Activated T-helper 1 cell treated with anti-CD3 and anti-CD28 coated beads, Interleukin-12 subunit alpha, Interleukin-12 subunit beta, Interleukin-2, Interleukin-4 antibody, amounts not matched to agents 30 ng/mL and 10 ng/mL and 1 ng/mL, durations not matched to agents 14 hours and 24 hours and 36 hours (primary cell): ENCODE measurements at regions of chr6 and their contacts with region 1.

Region 1: GRCh38 chr6:52419809-52420670 is at the start of gene EFHC1:
- DNase-seq: peak; percentile 98
- H3K4me3 Mint-ChIP-seq: no peak within 1 kb of the TSS
- H3K27ac Mint-ChIP-seq: no peak within 1 kb of the TSS
- H3K4me1 Mint-ChIP-seq: peaks cover 14% of the 10 kb centered on the region
- H3K27me3 Mint-ChIP-seq: peaks cover 6% of the 10 kb centered on the region
- total RNA-seq, gene EFHC1: 0.70 and 1.3 TPM in 2 replicates

Region 2: DNA sequence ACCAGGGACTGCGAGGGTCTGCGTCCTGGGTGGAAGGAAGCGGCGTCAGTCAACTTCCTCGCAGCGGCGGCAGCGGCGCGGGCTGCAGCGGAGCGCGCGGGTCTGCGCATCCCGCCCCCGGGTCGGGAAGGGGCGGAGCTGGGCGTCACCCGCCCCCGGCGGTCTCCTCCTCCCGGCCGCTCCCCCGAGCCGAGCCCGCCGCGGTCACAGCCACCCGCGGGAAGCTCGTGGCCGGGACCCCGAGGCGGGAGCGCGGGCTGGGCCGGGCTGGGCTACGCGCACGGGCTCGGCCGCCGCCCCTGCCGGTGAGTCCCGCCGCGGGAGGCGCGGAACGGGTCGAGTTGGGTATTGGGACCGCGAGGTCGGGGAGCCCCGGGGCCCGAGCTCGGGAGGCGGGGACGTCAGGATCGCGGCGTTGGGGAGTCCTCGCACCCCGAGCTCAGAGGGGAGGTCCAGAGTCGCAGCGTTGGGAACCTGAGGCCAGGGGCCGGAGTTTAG is 58.0 kb before region 1 on chr6 and contains the start of gene PAQR8:
- intact Hi-C with region 1: loop called (anchors 1 kb)
- DNase-seq: peak; percentile 75
- H3K4me3 Mint-ChIP-seq: peak within 1 kb of the TSS; percentile 96
- H3K27ac Mint-ChIP-seq: peak within 1 kb of the TSS; percentile 84
- H3K4me1 Mint-ChIP-seq: peaks cover 33% of the 10 kb centered on the region
- H3K27me3 Mint-ChIP-seq: peaks cover 7% of the 10 kb centered on the region
- total RNA-seq, gene PAQR8: 2.5 and 2.8 TPM in 2 replicates

Region 3: GRCh38 chr6:52491203-52492069 is 71.4 kb after region 1 on chr6:
- intact Hi-C with region 1: loop called (anchors 5 kb)
- DNase-seq: no peak
- H3K4me3 Mint-ChIP-seq: no peak overlapping the region
- H3K27ac Mint-ChIP-seq: no peak overlapping the region
- H3K4me1 Mint-ChIP-seq: peaks cover 28% of the 10 kb centered on the region
- H3K27me3 Mint-ChIP-seq: peaks cover 10% of the 10 kb centered on the region

Region 4: DNA sequence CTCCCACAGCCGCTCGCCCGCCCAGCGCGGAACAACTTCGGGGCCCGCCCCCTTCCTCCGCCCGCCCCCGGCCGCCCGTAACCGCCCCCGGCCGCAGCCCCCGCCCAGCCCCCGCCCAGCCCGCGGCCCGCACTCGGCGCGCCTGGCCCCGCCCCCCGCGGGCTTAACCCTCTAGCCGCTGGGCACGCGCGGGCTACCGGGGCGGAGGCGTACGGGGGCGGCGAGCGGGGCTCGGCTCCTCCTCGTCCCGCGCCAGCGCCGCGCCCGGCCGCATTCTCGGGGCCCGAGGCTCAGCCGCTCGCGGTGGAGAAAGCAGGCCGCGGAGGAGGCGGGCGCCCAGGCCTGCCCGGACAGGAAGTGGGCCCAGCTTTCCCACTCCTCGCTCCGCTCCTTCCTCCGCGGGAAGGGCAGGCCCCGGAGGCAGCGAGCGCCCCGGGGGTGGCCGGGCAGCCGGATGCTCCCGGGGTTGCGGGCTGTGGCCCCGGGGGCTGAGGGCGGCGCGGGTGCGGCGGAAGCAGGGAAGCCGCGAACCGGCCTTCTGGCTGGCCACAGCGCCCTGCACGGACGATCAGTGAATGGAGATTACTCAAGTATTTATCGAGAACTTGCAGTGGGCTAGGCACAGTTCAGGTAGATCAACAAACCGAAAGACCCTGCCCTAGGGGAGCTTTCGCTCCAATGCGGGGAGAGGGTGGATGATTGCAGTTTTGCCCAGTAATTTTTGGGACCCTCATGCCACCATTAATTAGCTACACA is 157.2 kb after region 1 on chr6 and contains the start of gene TRAM2:
- intact Hi-C with region 1: loop called (anchors 1 kb)
- DNase-seq: peak; percentile 69
- H3K4me3 Mint-ChIP-seq: peak within 1 kb of the TSS; percentile 79
- H3K27ac Mint-ChIP-seq: peak within 1 kb of the TSS; percentile 66
- H3K4me1 Mint-ChIP-seq: peaks cover 39% of the 10 kb centered on the region
- H3K27me3 Mint-ChIP-seq: peaks cover 14% of the 10 kb centered on the region
- total RNA-seq, gene TRAM2: 2.1 and 2.5 TPM in 2 replicates

Region 5: DNA sequence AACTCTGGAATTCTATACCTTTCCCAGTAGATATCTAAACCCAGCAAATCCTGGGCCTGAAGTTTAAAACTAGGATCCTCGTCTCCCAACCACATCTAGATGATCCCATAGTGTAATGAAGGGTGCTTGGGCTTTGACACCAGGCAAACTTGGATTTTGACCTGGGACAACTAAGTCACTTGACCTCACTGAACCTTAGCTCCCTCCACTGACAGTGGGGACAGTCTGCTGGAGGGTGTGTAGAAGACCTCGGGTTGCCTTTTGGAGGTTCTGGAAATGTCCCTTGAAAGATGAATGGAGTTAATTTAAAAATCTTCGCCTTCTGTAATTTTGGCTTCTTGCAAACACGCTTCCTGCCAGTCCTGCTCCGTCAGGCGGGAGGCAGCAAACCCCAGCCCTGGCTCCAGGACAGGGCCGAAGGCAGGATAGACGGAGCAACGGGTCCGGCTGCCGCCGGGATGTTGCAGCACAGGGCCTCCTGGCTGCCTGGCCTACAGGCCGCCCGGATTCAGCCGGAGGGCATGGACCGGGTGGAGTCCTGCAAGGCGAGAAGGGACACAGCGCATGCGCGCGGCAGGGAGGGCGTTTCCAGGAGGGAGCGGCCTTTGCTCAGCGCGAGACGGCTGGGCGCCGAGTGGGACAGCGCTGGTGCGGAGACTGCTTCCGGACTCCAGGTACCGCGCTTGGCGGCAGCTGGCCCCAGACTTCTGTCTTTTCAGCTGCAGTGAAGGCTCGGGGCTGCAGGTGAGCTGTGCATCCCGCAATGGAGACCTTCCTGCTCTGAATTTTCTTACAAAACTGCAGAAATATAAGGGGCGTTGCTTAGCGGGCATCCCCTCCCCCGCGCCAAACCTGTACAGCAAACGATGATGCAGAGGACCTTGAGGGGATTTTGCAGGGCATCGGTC is 250.7 kb after region 1 on chr6 and contains the start of gene TMEM14A:
- intact Hi-C with region 1: loop called (anchors 1 kb)
- DNase-seq: peak; percentile 91
- H3K4me3 Mint-ChIP-seq: peak within 1 kb of the TSS; percentile 92
- H3K27ac Mint-ChIP-seq: peak within 1 kb of the TSS; percentile 60
- H3K4me1 Mint-ChIP-seq: peaks cover 33% of the 10 kb centered on the region
- H3K27me3 Mint-ChIP-seq: peaks cover 5% of the 10 kb centered on the region
- total RNA-seq, gene TMEM14A: 12.2 and 15.1 TPM in 2 replicates

Region 6: GRCh38 chr6:53544470-53545308 is 1124.6 kb after region 1 on chr6 and contains the start of gene GCLC:
- intact Hi-C with region 1: loop called (anchors 10 kb)
- DNase-seq: peak; percentile 84
- H3K4me3 Mint-ChIP-seq: peak within 1 kb of the TSS; percentile 96
- H3K27ac Mint-ChIP-seq: peak within 1 kb of the TSS; percentile 96
- H3K4me1 Mint-ChIP-seq: peaks cover 49% of the 10 kb centered on the region
- H3K27me3 Mint-ChIP-seq: peaks cover 10% of the 10 kb centered on the region
- total RNA-seq, gene GCLC: 26.1 and 28.9 TPM in 2 replicates